ENCODE measurements at regions of chr11 and their contacts with region 1.

Region 1: GRCh38 chr11:69443138-69443967 is 38.1 kb upstream of the LINC01488 start:
- DNase-seq: peak; percentile 89 to 92 (median 91)
- H3K4me3 ChIP-seq: peak overlapping the region in 1 of 4 donors; percentile 44
- H3K27ac ChIP-seq: peak overlapping the region; percentile 22 to 91 (median 78)
- H3K4me1 ChIP-seq: peaks cover 15 to 19% of the 10 kb centered on the region in 2 donors
- H3K27me3 ChIP-seq: no peaks in the 10 kb centered on the region
- CTCF ChIP-seq: no peak
- POLR2A ChIP-seq: peak in 1 of 2 donors; percentile 44

Region 2: GRCh38 chr11:69296890-69297786 is 146.2 kb before region 1 on chr11:
- intact Hi-C with region 1: loop called in 1 of 2 experiments (anchors 10 kb)
- DNase-seq: peak; percentile 91 to 97 (median 95)
- H3K4me3 ChIP-seq: peak overlapping the region in 1 of 4 donors; percentile 42
- H3K27ac ChIP-seq: peak overlapping the region; percentile 58 to 87 (median 85)
- H3K4me1 ChIP-seq: peaks cover 30% of the 10 kb centered on the region in 2 donors
- H3K27me3 ChIP-seq: no peaks in the 10 kb centered on the region
- CTCF ChIP-seq: no peak
- POLR2A ChIP-seq: peak in 1 of 2 donors; percentile 20